SK-N-SH (cell line): ENCODE measurements at regions of chr10 and their contacts with region 1.

Region 1: GRCh38 chr10:63767138-63767801 is 246.1 kb downstream of the REEP3 start:
- DNase-seq: no peak
- H3K4me3 ChIP-seq: no peak overlapping the region
- H3K27ac ChIP-seq: no peak overlapping the region
- H3K4me1 ChIP-seq: peaks cover 2 to 8% of the 10 kb centered on the region in 2 experiments; a peak in 3 of 4 replicates
- H3K27me3 ChIP-seq: no peaks in the 10 kb centered on the region; the same call in 1 of the 2 replicates
- CTCF ChIP-seq: peak; percentile 74
- EP300 ChIP-seq: no peak
- RAD21 ChIP-seq: peak; percentile 79

Region 2: DNA sequence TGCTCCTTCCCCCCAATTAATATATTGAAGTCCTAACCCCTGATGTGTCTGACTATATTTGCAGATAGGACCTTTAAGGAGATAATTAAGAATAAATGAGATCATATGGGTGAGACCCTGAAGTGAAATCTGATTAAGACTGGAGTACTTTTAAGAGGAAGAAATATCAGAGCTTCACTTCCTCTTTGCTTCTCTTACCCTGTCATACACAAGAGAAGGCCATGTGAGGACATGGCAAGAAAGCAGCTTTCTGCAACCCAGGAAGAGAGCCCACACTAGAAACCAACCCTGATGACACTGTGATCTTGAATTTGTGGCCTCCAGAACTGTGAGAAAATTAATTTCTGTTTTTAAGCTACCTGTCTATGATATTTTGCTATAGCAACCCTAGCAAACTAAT is 345.7 kb before region 1 on chr10:
- CTCF ChIA-PET with region 1: no interaction called
- POLR2A ChIA-PET with region 1: no interaction called
- DNase-seq: no peak
- H3K4me3 ChIP-seq: no peak overlapping the region
- H3K27ac ChIP-seq: peak overlapping the region in 1 of 2 experiments; percentile 6; a peak in 1 of 4 replicates
- H3K4me1 ChIP-seq: peaks cover 7 to 18% of the 10 kb centered on the region in 2 experiments; a peak in 2 of 4 replicates
- H3K27me3 ChIP-seq: no peaks in the 10 kb centered on the region
- CTCF ChIP-seq: no peak
- EP300 ChIP-seq: no peak
- RAD21 ChIP-seq: no peak

Region 3: DNA sequence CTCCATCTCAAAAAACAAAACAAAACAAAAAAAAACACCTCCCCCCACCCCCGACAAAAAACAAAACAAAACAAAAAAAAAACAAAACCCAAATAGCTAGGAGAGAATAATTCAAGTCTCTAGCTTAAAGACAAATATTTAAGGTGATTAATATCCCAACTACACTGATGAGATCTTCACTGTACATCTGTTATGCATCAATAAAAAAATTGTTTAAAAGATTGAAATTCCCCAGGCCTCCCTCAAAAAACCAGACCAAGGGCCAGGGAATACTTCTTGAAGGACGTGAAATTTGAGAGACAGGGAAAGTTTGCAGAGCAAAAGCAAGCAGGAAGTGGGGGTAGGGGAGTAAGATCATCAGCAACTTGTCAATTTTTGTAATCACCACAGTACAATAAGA is 13.5 kb before region 1 on chr10:
- CTCF ChIA-PET with region 1: interaction called, 12 read pairs
- POLR2A ChIA-PET with region 1: no interaction called
- DNase-seq: no peak
- H3K4me3 ChIP-seq: no peak overlapping the region
- H3K27ac ChIP-seq: no peak overlapping the region
- H3K4me1 ChIP-seq: peaks cover 0 to 3% of the 10 kb centered on the region in 2 experiments; a peak in 2 of 4 replicates
- H3K27me3 ChIP-seq: no peaks in the 10 kb centered on the region
- CTCF ChIP-seq: no peak
- EP300 ChIP-seq: peak; percentile 50; a peak in 2 of 4 replicates
- RAD21 ChIP-seq: no peak

Region 4: GRCh38 chr10:63799521-63800300 is 32.4 kb after region 1 on chr10:
- CTCF ChIA-PET with region 1: no interaction called
- POLR2A ChIA-PET with region 1: no interaction called
- DNase-seq: no peak
- H3K4me3 ChIP-seq: no peak overlapping the region
- H3K27ac ChIP-seq: peak overlapping the region in 1 of 2 experiments; percentile 29; a peak in 1 of 4 replicates
- H3K4me1 ChIP-seq: no peaks in the 10 kb centered on the region; a peak in 1 of 4 replicates
- H3K27me3 ChIP-seq: no peaks in the 10 kb centered on the region; the same call in 1 of the 2 replicates
- CTCF ChIP-seq: no peak
- EP300 ChIP-seq: no peak
- RAD21 ChIP-seq: no peak

Region 5: GRCh38 chr10:63987212-63987611 is 219.9 kb after region 1 on chr10:
- CTCF ChIA-PET with region 1: no interaction called
- POLR2A ChIA-PET with region 1: no interaction called
- DNase-seq: no peak
- H3K4me3 ChIP-seq: no peak overlapping the region
- H3K27ac ChIP-seq: no peak overlapping the region
- H3K4me1 ChIP-seq: no peaks in the 10 kb centered on the region
- H3K27me3 ChIP-seq: no peaks in the 10 kb centered on the region
- CTCF ChIP-seq: peak; percentile 37
- EP300 ChIP-seq: no peak
- RAD21 ChIP-seq: no peak